ENCODE measurements at regions of chr11 and their contacts with region 1.

Region 1: GRCh38 chr11:73597956-73598718 is at the start of gene FAM168A:
- DNase-seq: peak; percentile 97
- ATAC-seq: peak; percentile 94
- H3K4me3 Mint-ChIP-seq: peak within 1 kb of the TSS; percentile 87
- H3K27ac Mint-ChIP-seq: peak within 1 kb of the TSS; percentile 92
- H3K4me1 Mint-ChIP-seq: peaks cover 34% of the 10 kb centered on the region
- H3K27me3 Mint-ChIP-seq: no peaks in the 10 kb centered on the region
- total RNA-seq, gene FAM168A: 12.7 to 17.5 TPM

Region 2: DNA sequence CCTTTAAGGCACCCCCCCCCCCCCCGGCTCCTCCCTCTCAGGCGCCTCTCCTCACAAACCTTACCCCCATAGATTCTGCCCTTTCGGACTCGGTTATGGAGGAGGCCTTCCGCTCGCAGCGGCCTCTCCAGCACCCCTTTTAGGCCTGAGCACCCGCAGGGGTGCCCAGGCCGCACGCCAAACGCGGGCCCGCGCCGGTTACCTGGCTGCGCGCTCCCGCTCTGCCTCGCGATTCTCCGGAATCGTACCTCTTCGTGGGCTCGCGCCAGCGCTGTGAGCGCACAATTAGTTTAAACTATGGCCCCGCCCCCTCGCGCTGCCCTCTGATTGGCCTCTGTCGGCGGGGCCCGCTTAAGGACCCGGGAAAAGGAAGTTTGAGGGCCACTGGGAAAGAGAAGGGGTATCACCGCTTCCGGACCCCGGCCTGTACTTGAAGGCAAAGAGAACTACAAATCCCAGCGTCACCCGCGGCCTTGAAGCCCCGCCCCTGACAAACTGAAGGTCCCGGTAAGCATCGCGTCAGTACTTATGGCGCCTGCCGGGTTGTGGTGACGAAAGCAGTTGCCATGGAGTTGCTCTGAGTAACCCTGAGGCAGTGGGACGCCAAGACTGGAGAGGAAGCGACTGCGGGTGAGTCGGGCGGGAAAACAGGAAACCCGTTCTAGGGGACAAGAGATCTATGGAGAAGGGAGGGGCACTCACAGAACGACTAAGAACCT is 1517.7 kb before region 1 on chr11 and contains the starts of genes LRRC51 and NUMA1:
- CTCF ChIA-PET with region 1: no interaction called
- POLR2A ChIA-PET with region 1: no interaction called
- intact Hi-C with region 1: loop called in 1 of 2 experiments (anchors 2 kb)
- DNase-seq: peak; percentile 100
- ATAC-seq: peak; percentile 96
- H3K4me3 Mint-ChIP-seq: peak within 1 kb of the TSS; percentile 91
- H3K27ac Mint-ChIP-seq: peak within 1 kb of the TSS; percentile 94
- H3K4me1 Mint-ChIP-seq: peaks cover 37% of the 10 kb centered on the region
- H3K27me3 Mint-ChIP-seq: no peaks in the 10 kb centered on the region
- total RNA-seq, gene LRRC51: 7.7 to 11.6 TPM
- total RNA-seq, gene NUMA1: 154 to 167 TPM

Region 3: DNA sequence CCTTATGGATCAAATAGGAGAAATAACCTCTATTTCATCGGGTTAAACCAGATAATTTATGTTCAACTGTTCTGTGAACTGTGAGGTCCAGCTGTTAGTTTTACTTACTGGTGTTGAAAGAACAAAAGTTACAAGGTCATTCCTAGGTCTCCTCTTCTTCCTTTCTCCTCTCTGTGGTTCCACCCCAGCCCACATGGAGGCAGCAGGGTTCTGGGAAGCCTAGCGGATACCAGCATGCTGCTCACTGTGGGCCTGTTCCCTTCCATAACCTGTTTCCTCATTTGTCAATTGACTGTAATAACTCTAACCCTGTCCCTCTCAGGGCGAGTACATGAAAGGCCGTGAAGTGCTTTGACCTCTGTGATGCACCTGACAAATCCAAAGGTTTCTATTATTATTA is 194.1 kb before region 1 on chr11:
- CTCF ChIA-PET with region 1: no interaction called
- POLR2A ChIA-PET with region 1: no interaction called
- intact Hi-C with region 1: no loop called
- DNase-seq: peak; percentile 7
- ATAC-seq: no peak
- H3K4me3 Mint-ChIP-seq: no peak overlapping the region
- H3K27ac Mint-ChIP-seq: no peak overlapping the region
- H3K4me1 Mint-ChIP-seq: peaks cover 3% of the 10 kb centered on the region
- H3K27me3 Mint-ChIP-seq: no peaks in the 10 kb centered on the region

Region 4: DNA sequence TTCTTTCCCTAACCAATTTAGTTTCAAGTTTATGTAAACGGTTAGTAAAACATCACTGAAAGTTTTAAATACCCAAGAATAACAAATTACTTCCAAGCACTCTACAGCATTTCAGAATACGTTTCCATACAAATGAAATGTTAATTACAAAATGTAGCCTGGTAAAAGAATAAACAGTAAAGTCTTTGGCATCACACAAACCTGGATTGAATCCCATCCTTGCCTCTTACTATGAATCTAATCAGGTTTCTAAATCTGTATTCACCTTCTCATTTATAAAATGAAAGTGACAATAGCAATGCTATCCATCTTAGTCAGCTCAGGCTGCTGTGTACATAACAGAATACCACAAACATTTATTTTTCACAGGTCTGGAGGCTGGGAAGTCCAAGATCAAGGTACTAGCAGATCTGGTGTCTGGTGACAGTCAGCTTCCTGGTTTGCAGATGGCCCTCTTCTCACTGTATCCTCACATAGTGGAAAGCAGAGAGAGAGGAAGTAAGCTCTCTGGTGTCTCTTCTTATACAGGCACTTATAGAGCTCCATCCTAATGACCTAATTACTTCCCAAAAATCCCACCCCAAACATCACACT is 19.4 kb before region 1 on chr11:
- CTCF ChIA-PET with region 1: interaction called, 4 read pairs
- POLR2A ChIA-PET with region 1: no interaction called
- intact Hi-C with region 1: loop called (anchors 1 to 2 kb)
- DNase-seq: peak; percentile 19
- ATAC-seq: peak; percentile 83
- H3K4me3 Mint-ChIP-seq: no peak overlapping the region
- H3K27ac Mint-ChIP-seq: peak overlapping the region; percentile 43
- H3K4me1 Mint-ChIP-seq: peaks cover 31% of the 10 kb centered on the region
- H3K27me3 Mint-ChIP-seq: no peaks in the 10 kb centered on the region

Region 5: DNA sequence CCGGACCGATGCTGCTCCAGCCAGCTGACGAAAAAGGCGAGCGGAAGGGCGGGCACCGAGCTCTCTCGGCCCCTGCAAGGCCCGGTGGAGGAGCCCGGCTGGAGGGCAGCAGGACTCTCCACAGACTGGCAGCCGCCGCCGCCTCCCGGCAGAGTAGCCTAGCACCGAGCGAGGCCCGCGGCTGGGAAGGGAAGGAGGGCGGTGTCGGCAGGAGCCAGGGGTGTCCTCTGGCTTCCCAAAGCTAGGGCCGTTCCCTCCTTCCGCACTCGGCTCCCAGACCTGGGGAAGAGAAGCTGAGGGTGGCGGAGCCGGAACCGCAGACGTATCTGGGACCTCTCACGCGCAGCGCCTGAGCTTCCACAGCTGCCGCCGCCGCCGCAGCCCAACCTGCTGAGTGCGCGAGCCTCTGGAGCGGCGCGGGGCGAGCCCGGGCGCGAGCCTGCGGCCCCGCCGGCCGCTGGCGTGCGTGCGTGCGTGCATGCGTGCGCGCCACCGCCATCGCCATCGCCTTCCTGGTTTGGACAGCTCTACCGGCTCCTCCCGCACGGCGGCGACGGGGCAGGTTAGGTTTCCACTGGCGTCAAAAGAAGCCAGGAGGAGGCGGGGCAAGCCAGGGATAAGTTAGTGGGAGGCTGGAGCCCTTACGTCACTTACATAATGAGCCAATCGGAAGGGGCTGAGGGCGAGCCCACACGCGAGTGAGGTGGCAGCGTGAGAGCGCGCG is 162.7 kb after region 1 on chr11 and contains the start of gene RAB6A:
- CTCF ChIA-PET with region 1: no interaction called
- POLR2A ChIA-PET with region 1: interaction called, 3 read pairs
- intact Hi-C with region 1: loop called in 1 of 2 experiments (anchors 1 kb)
- DNase-seq: peak; percentile 100
- ATAC-seq: peak; percentile 93
- H3K4me3 Mint-ChIP-seq: peak within 1 kb of the TSS; percentile 97
- H3K27ac Mint-ChIP-seq: peak within 1 kb of the TSS; percentile 86
- H3K4me1 Mint-ChIP-seq: peaks cover 22% of the 10 kb centered on the region
- H3K27me3 Mint-ChIP-seq: no peaks in the 10 kb centered on the region
- total RNA-seq, gene RAB6A: 57.9 to 58.9 TPM

Region 6: GRCh38 chr11:73876424-73877300 is 278.5 kb after region 1 on chr11 and contains the starts of genes COA4 and PAAF1:
- CTCF ChIA-PET with region 1: no interaction called
- POLR2A ChIA-PET with region 1: no interaction called
- intact Hi-C with region 1: loop called in 1 of 2 experiments (anchors 1 kb)
- DNase-seq: peak; percentile 97
- ATAC-seq: peak; percentile 95
- H3K4me3 Mint-ChIP-seq: peak within 1 kb of the TSS; percentile 93
- H3K27ac Mint-ChIP-seq: peak within 1 kb of the TSS; percentile 100
- H3K4me1 Mint-ChIP-seq: peaks cover 32% of the 10 kb centered on the region
- H3K27me3 Mint-ChIP-seq: no peaks in the 10 kb centered on the region
- total RNA-seq, gene COA4: 103 to 112 TPM
- total RNA-seq, gene PAAF1: 34.2 to 34.8 TPM

Region 7: DNA sequence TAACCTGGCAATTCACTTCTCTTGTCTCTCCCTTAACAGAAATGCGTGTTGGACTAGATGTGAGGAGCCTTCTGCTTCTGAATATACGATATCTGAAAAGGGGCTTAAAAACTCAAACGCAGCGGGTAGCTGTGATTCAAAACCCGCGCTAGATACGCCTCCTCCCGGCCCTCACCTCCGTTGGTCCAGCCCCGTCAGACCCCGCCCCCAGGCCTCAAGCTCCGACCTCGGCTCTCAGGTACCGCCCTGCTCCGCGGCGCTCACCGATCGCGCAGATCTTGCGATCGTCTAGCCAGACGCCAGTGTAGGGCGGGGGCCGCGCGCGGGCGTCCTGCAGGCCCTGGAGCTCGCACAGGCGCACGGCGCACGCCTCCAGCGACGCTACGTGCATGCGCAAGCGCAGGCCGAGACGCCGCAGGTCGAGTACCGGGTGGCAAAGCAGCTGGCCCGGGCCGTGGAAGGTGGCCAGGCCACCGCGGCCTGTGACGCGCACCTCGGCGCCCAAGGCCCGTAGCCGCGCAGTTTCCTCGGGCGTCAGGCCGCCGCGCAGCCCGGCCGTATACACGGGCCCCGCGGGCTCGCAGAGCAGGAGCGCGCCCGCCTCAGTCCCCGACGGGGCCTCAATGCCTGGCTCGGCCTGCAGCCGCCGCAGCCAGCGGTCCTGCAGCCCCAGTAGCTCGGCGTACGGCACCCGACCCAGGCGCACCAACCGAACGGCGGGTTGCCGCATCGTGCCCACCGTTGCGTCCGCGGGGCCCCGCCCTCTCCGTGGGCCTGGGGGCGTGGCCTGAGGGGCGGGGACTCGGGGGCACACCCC is 895.0 kb after region 1 on chr11 and contains the start of gene LIPT2:
- CTCF ChIA-PET with region 1: no interaction called
- POLR2A ChIA-PET with region 1: interaction called, 3 read pairs
- intact Hi-C with region 1: loop called in 1 of 2 experiments (anchors 1 kb)
- DNase-seq: peak; percentile 99
- ATAC-seq: peak; percentile 96
- H3K4me3 Mint-ChIP-seq: peak within 1 kb of the TSS; percentile 73
- H3K27ac Mint-ChIP-seq: peak within 1 kb of the TSS; percentile 86
- H3K4me1 Mint-ChIP-seq: peaks cover 22% of the 10 kb centered on the region
- H3K27me3 Mint-ChIP-seq: no peaks in the 10 kb centered on the region
- total RNA-seq, gene LIPT2: 4.2 to 5.0 TPM